ENCODE measurements at regions of chr19 and their contacts with region 1.

Region 1: DNA sequence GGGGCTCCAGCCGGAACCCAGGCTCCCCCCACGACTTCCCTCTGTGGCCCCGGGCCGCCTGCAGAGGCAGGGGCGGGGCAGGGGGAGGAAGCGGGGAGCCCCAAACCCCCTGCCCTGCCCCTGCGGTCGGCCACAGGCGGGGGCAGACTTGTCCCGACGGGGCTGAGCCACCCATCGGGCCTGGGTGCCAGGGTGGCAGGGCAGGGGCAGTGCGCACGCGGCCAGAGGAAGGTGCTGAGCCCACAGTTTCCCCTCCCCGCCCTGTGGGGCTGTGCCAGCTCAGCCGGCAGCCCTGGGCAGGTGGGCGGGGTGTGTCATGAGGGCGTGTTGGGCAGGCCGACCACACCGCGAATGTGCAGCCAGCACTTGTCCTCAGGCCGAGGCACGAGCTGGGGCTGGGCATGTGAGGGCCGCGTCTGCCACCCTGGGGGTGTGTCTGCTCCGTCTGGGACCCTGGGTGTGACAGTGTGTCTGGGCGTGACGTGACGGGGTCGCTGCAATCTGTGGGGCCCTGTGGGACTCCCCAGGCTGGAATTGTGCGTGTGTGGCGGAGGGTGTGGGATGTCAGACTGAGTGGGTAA is 17.7 kb downstream of the CCDC97 start:
- DNase-seq: peak; percentile 94
- ATAC-seq: peak; percentile 73
- H3K4me3 Mint-ChIP-seq: peak overlapping the region; percentile 65
- H3K27ac Mint-ChIP-seq: peak overlapping the region; percentile 96
- H3K4me1 Mint-ChIP-seq: peaks cover 68% of the 10 kb centered on the region
- H3K27me3 Mint-ChIP-seq: no peaks in the 10 kb centered on the region
- CTCF ChIP-seq: no peak

Region 2: GRCh38 chr19:41095703-41096102 is 232.0 kb before region 1 on chr19:
- CTCF ChIA-PET with region 1: no interaction called
- POLR2A ChIA-PET with region 1: no interaction called
- intact Hi-C with region 1: no loop called
- DNase-seq: peak; percentile 7
- ATAC-seq: peak; percentile 68
- H3K4me3 Mint-ChIP-seq: no peak overlapping the region
- H3K27ac Mint-ChIP-seq: no peak overlapping the region
- H3K4me1 Mint-ChIP-seq: no peaks in the 10 kb centered on the region
- H3K27me3 Mint-ChIP-seq: peaks cover 21% of the 10 kb centered on the region
- CTCF ChIP-seq: no peak

Region 3: DNA sequence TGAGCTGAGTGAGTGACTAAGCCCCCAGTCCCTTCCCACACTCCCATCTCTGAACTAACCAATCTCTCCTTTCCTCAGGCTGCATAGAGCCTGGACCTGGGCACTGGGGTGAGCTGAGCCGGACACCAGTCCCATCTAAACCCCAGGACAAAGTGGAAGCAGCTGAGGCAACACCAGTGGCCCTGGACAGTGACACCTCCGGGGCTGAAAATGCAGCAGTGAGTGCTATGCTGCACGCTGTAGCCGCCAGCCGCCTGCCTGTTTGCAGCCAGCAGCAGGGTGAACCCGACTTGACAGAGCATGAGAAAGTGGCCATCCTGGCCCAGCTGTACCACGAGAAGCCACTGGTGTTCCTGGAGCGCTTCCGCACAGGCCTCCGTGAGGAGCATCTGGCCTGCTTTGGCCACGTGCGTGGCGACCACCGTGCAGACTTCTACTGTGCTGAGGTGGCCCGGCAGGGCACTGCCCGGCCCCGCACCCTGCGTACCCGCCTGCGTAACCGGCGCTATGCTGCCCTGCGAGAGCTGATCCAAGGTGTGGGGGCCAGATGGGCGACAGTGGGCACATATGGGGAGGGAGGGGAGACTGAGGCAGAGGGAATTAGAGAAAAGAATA is 11.3 kb before region 1 on chr19:
- CTCF ChIA-PET with region 1: no interaction called
- POLR2A ChIA-PET with region 1: interaction called, 10 read pairs
- intact Hi-C with region 1: no loop called
- DNase-seq: no peak
- ATAC-seq: no peak
- H3K4me3 Mint-ChIP-seq: no peak overlapping the region
- H3K27ac Mint-ChIP-seq: peak overlapping the region; percentile 78
- H3K4me1 Mint-ChIP-seq: peaks cover 22% of the 10 kb centered on the region
- H3K27me3 Mint-ChIP-seq: no peaks in the 10 kb centered on the region
- CTCF ChIP-seq: no peak

Region 4: DNA sequence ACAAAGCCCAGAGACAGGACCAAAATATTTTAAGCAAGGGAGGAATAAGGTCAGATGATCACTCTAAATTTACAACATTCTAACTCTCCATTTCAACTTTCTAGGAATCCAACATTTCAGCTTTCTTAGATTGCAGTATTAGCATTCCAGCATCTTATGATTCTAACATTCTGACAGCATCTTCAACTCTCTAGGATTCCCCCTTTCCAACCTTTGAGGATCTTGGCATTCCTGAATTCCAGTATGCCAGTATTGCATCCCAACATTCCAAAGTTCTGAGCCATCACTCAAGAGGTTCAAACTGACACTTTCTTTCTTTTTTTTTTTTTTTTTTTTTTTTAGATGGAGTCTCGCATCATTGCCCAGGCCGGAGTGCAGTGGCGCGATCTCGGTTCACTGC is 12.3 kb after region 1 on chr19:
- CTCF ChIA-PET with region 1: no interaction called
- POLR2A ChIA-PET with region 1: interaction called, 10 read pairs
- intact Hi-C with region 1: no loop called
- DNase-seq: no peak
- ATAC-seq: no peak
- H3K4me3 Mint-ChIP-seq: no peak overlapping the region
- H3K27ac Mint-ChIP-seq: no peak overlapping the region
- H3K4me1 Mint-ChIP-seq: peaks cover 36% of the 10 kb centered on the region
- H3K27me3 Mint-ChIP-seq: no peaks in the 10 kb centered on the region
- CTCF ChIP-seq: no peak

Region 5: GRCh38 chr19:41353466-41354342 is 26.0 kb after region 1 on chr19 and contains the start of gene TGFB1:
- CTCF ChIA-PET with region 1: interaction called, 7 read pairs
- POLR2A ChIA-PET with region 1: interaction called, 19 read pairs
- intact Hi-C with region 1: no loop called
- DNase-seq: peak; percentile 94
- ATAC-seq: peak; percentile 59
- H3K4me3 Mint-ChIP-seq: peak within 1 kb of the TSS; percentile 100
- H3K27ac Mint-ChIP-seq: peak within 1 kb of the TSS; percentile 99
- H3K4me1 Mint-ChIP-seq: peaks cover 60% of the 10 kb centered on the region
- H3K27me3 Mint-ChIP-seq: no peaks in the 10 kb centered on the region
- CTCF ChIP-seq: peak; percentile 83
- total RNA-seq, gene TGFB1: 112 to 123 TPM

Region 6: DNA sequence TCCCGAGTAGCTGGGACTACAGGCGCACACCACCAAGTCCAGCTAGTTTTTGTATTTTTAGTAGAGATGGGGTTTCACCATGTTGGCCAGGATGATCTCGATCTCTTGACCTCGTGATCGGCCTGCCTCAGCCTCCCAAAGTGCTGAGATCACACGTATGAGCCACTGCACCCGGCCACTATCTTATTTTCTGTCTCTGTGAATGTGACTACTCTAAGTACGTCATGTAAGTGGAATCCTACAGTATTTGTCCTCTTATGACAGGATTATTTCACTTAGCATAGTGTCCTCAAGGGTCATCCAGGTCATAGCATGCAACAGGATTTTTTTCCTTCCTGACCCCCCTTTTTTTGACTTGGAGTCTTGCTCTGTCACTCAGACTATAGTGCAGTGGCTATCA is 43.9 kb after region 1 on chr19:
- CTCF ChIA-PET with region 1: no interaction called
- POLR2A ChIA-PET with region 1: no interaction called
- intact Hi-C with region 1: no loop called
- DNase-seq: no peak
- ATAC-seq: no peak
- H3K4me3 Mint-ChIP-seq: no peak overlapping the region
- H3K27ac Mint-ChIP-seq: no peak overlapping the region
- H3K4me1 Mint-ChIP-seq: peaks cover 9% of the 10 kb centered on the region
- H3K27me3 Mint-ChIP-seq: no peaks in the 10 kb centered on the region
- CTCF ChIP-seq: no peak